Activated B cell treated with CpG ODN at 0.5 μM for 24 hours (primary cell): ENCODE measurements at regions of chr1 and their contacts with region 1.

Region 1: DNA sequence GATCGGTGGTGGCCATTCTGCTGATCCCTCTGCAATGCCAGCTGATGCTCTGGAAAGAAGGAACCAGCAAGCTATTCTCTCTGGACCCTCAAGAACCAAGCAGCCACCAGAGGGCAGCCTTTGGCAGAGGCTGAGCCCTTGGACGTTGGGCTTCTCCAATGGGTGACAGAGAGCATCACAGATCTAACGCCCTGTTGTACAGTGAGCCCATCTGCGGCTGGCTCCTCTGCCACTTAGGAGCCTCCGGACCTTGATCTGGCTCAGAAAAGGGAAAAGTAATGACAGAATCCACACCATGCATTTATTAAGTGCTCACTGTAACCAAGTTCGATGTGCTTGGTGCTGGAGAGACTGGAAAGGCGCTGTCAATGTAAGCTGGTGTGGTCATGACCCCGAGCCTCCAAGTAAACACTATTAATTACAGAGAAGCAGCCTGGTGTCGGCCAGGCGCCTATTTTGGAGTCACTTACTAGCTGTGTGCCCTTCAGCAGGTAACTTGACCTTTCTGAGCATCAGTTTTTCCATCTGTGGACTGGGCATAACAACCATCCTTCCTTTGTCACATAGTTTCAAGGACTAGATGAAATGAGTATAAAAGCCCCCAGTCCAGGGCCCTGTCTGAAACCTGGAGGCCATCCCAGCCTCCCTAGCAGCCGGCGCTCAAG is 34.9 kb downstream of the ECE1 start:
- DNase-seq: peak; percentile 66
- ATAC-seq: peak; percentile 79
- H3K4me3 Mint-ChIP-seq: no peak overlapping the region
- H3K27ac Mint-ChIP-seq: peak overlapping the region; percentile 69
- H3K4me1 Mint-ChIP-seq: peaks cover 24% of the 10 kb centered on the region
- H3K27me3 Mint-ChIP-seq: no peaks in the 10 kb centered on the region
- CTCF ChIP-seq: no peak

Region 2: DNA sequence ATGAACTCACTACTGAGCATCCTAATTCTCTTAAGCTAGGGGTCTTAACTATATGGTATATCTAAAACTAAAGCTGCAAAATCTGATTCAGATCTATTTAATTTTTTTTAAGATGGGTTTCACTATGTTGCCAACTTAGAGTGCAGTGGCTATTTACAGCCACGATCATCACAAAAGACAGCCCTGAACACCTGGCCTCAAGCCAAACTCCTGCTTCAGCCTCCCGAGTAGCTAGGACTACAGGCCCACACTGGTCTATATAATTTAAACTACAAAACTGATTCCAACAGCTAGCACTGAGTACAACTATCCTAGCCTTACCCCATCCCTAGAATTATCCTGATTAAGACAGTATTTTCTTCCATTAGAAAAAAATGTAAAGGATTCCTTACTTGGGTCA is 115.8 kb before region 1 on chr1:
- CTCF ChIA-PET with region 1: no interaction called
- POLR2A ChIA-PET with region 1: no interaction called
- intact Hi-C with region 1: no loop called
- DNase-seq: no peak
- ATAC-seq: no peak
- H3K4me3 Mint-ChIP-seq: no peak overlapping the region
- H3K27ac Mint-ChIP-seq: no peak overlapping the region
- H3K4me1 Mint-ChIP-seq: peaks cover 6% of the 10 kb centered on the region
- H3K27me3 Mint-ChIP-seq: no peaks in the 10 kb centered on the region
- CTCF ChIP-seq: no peak

Region 3: DNA sequence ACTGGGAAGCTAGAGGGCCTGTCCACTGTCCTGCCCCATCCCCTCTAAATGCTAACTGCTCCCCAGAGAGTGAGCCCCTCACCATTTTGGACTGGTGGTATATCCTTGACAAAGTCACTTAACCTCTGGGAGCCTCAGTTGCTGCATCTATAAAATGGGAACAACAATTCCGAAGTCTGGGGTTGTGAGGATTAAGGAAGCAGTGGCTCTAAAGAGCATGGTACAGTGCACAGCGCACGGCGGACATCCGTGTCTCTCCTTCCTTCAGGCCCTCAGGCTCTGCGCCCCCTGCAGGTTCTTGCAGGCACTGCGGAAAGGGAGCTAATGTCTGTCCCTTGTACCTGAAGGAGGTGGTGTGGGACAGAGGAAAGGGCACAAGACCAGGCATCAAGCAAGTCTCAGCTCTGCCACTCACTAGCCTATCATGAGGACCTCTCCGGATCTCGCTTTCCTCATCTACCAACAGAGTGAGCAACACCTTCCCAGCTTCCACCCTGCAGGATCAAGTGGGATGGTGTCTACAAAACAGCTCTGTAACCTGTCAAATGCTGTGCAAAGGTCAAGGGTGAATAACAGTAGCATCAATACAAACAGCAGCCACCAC is 14.8 kb after region 1 on chr1:
- CTCF ChIA-PET with region 1: interaction called, 46 read pairs
- POLR2A ChIA-PET with region 1: interaction called, 5 read pairs
- intact Hi-C with region 1: loop called (anchors 1 kb)
- DNase-seq: peak; percentile 77
- ATAC-seq: peak; percentile 95
- H3K4me3 Mint-ChIP-seq: no peak overlapping the region
- H3K27ac Mint-ChIP-seq: peak overlapping the region; percentile 5
- H3K4me1 Mint-ChIP-seq: peaks cover 15% of the 10 kb centered on the region
- H3K27me3 Mint-ChIP-seq: no peaks in the 10 kb centered on the region
- CTCF ChIP-seq: no peak

Region 4: DNA sequence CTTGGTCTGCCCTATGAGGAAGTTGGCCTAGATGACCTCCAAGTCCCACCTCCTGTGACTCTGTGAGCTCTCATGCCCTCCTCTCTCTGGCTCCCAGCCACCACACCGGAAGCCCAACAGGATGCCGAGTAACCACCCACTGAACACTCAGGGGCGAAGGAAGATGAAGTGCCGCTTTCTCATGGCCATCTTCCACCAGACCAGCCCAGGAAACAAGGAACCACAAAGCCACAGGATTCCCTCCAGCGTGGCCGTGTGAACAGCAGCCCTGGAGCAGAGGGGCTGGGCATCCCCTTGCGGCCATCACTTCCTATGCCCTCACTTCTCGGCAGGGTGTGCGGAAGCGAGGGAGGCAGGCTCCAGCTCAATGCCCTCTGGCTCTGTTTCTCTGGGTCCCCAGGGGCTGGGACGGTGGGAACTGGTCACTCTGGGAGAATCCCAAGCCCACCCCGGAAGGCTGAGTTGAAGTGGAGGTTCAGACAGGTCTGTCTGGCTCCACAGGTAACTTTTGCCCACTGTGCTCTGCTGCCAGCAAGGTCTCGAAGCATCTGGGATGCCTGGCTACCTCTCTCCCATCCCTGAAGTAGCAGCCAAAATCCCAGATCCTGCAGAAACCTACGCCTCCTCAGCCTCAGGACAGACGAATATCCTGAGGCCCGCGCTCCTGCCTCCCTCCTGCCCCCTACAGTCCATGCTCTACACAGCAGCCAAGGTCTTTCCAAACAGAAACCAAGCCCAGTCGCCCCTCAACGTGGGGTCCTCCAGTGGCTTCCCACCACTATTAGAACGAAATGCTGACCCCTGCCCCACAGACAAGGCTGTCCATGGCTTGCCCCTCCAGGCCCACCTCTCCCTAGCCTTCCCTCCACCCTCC is 79.0 kb after region 1 on chr1:
- CTCF ChIA-PET with region 1: interaction called, 14 read pairs
- POLR2A ChIA-PET with region 1: interaction called, 7 read pairs
- intact Hi-C with region 1: loop called (anchors 1 kb)
- DNase-seq: peak; percentile 67
- ATAC-seq: peak; percentile 83
- H3K4me3 Mint-ChIP-seq: peak overlapping the region; percentile 87
- H3K27ac Mint-ChIP-seq: peak overlapping the region; percentile 94
- H3K4me1 Mint-ChIP-seq: peaks cover 89% of the 10 kb centered on the region
- H3K27me3 Mint-ChIP-seq: no peaks in the 10 kb centered on the region
- CTCF ChIP-seq: no peak

Region 5: GRCh38 chr1:21439721-21440629 is 184.6 kb after region 1 on chr1 and contains the start of gene NBPF3:
- CTCF ChIA-PET with region 1: no interaction called
- POLR2A ChIA-PET with region 1: no interaction called
- intact Hi-C with region 1: loop called (anchors 10 kb)
- DNase-seq: peak; percentile 65
- ATAC-seq: peak; percentile 97
- H3K4me3 Mint-ChIP-seq: peak within 1 kb of the TSS; percentile 90
- H3K27ac Mint-ChIP-seq: peak within 1 kb of the TSS; percentile 73
- H3K4me1 Mint-ChIP-seq: peaks cover 16% of the 10 kb centered on the region
- H3K27me3 Mint-ChIP-seq: peaks cover 16% of the 10 kb centered on the region
- CTCF ChIP-seq: no peak
- total RNA-seq, gene NBPF3: 3.0 and 4.3 TPM in 2 replicates

Region 6: GRCh38 chr1:21534674-21535378 is 279.4 kb after region 1 on chr1:
- CTCF ChIA-PET with region 1: interaction called, 9 read pairs
- POLR2A ChIA-PET with region 1: no interaction called
- intact Hi-C with region 1: loop called (anchors 10 kb)
- DNase-seq: no peak
- ATAC-seq: peak; percentile 74
- H3K4me3 Mint-ChIP-seq: no peak overlapping the region
- H3K27ac Mint-ChIP-seq: no peak overlapping the region
- H3K4me1 Mint-ChIP-seq: peaks cover 5% of the 10 kb centered on the region
- H3K27me3 Mint-ChIP-seq: peaks cover 19% of the 10 kb centered on the region
- CTCF ChIP-seq: no peak

Region 7: GRCh38 chr1:21696931-21697330 is 441.5 kb after region 1 on chr1:
- CTCF ChIA-PET with region 1: no interaction called
- POLR2A ChIA-PET with region 1: no interaction called
- intact Hi-C with region 1: no loop called
- DNase-seq: no peak
- ATAC-seq: no peak
- H3K4me3 Mint-ChIP-seq: no peak overlapping the region
- H3K27ac Mint-ChIP-seq: no peak overlapping the region
- H3K4me1 Mint-ChIP-seq: no peaks in the 10 kb centered on the region
- H3K27me3 Mint-ChIP-seq: no peaks in the 10 kb centered on the region
- CTCF ChIP-seq: no peak